ENCODE measurements at regions of chr6 and their contacts with region 1.

Region 1: DNA sequence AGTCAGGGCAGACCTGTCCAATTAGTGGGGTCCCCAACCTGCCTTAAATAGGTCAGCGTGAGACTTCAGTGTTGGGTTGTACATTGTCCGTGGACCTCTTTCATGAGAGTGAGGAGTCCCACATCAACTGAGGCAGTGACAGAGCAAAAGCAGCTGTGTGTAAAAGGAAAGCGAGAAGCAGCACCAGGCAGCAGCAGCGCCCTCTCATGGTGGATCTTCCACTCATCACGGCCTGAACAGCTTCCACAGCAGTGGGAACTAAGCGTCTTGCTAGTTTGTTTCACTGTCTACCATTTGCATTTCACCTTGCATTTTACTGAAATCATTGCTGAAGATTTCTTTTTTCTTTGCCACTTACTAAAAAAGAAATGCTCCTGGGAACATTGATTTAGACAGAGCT is 333.8 kb downstream of the PKHD1 start:
- H3K4me3 Mint-ChIP-seq: no peak overlapping the region
- H3K27ac Mint-ChIP-seq: no peak overlapping the region
- H3K4me1 Mint-ChIP-seq: no peaks in the 10 kb centered on the region
- H3K27me3 Mint-ChIP-seq: no peaks in the 10 kb centered on the region

Region 2: GRCh38 chr6:51249798-51250197 is 503.8 kb before region 1 on chr6:
- intact Hi-C with region 1: loop called (anchors 5 kb)
- H3K4me3 Mint-ChIP-seq: no peak overlapping the region
- H3K27ac Mint-ChIP-seq: no peak overlapping the region
- H3K4me1 Mint-ChIP-seq: peaks cover 5% of the 10 kb centered on the region
- H3K27me3 Mint-ChIP-seq: no peaks in the 10 kb centered on the region

Measured in dendritic cell treated with granulocyte-macrophage colony-stimulating factor and Interleukin-4, amounts not matched to agents 40 ng/mL and 50 ng/mL, for 4 days (primary cell).